ENCODE measurements at regions of chr15 and their contacts with region 1.

Region 1: DNA sequence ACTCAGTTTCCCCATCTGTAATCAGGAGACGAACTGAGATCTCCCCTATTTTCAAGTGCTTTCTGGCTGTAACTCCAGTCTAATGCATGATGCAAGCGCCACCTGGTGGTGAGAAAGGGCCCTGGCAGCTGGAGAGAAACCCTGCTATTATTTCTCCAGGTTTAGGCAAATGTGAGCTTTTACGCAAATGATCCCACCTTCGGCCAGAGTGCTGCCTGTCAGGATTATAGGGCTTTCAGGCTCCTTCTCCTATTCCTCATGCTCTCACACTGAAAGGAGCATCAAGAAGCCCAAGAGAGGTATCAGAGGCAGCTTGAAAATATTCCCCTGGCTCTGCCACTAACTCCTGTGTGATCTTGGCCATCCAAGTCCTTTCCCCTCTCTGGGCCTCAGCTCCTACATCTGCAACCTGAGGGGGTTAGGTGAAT is 93.9 kb upstream of the RASGRF1 start:
- DNase-seq: peak; percentile 25
- ATAC-seq: peak; percentile 94
- H3K4me3 ChIP-seq: no peak overlapping the region
- H3K27ac ChIP-seq: no peak overlapping the region
- H3K4me1 ChIP-seq: no peaks in the 10 kb centered on the region
- H3K27me3 ChIP-seq: peaks cover 0 to 2% of the 10 kb centered on the region in 2 experiments; a peak in 1 of 4 replicates
- CTCF ChIP-seq: peak; percentile 94 to 97 (median 96)
- EP300 ChIP-seq: no peak
- POLR2A ChIP-seq: no peak
- RAD21 ChIP-seq: peak; percentile 97

Region 2: DNA sequence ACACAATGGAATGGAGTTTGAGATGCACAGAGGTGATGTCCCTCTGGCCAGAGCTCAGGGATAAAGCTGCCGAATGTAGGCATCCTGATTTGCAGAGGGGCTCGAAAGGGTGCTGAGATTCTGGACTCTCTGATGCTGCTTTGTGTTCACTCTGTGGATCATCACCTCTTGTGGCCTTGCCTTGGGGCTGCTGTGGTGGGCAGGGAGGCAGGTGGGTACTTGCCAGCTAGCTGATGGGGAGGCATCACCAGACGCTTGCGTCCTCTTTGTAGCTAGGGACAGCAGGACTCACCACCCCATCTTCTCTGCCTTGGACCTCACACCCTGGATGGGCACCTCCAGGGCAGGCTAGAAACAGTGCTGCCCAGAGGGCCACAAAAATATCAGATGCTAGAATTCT is 79.3 kb before region 1 on chr15:
- CTCF ChIA-PET with region 1: interaction called, 25 read pairs
- POLR2A ChIA-PET with region 1: no interaction called
- RAD21 ChIA-PET with region 1: no interaction called
- SMC1A ChIA-PET with region 1: interaction called, 9 read pairs
- in situ Hi-C with region 1: no loop called
- intact Hi-C with region 1: no loop called
- DNase-seq: no peak
- ATAC-seq: no peak
- H3K4me3 ChIP-seq: no peak overlapping the region
- H3K27ac ChIP-seq: no peak overlapping the region
- H3K4me1 ChIP-seq: peaks cover 4% of the 10 kb centered on the region; the same call in 1 of the 2 replicates
- H3K27me3 ChIP-seq: peaks cover 0 to 3% of the 10 kb centered on the region in 2 experiments; a peak in 2 of 4 replicates
- CTCF ChIP-seq: no peak
- EP300 ChIP-seq: no peak
- POLR2A ChIP-seq: no peak
- RAD21 ChIP-seq: no peak

Region 3: GRCh38 chr15:79168922-79169456 is 15.5 kb before region 1 on chr15:
- CTCF ChIA-PET with region 1: interaction called, 17 read pairs
- POLR2A ChIA-PET with region 1: no interaction called
- RAD21 ChIA-PET with region 1: interaction called, 4 read pairs
- SMC1A ChIA-PET with region 1: interaction called, 9 read pairs
- in situ Hi-C with region 1: no loop called
- intact Hi-C with region 1: no loop called
- DNase-seq: no peak
- ATAC-seq: peak; percentile 61
- H3K4me3 ChIP-seq: no peak overlapping the region
- H3K27ac ChIP-seq: no peak overlapping the region
- H3K4me1 ChIP-seq: no peaks in the 10 kb centered on the region
- H3K27me3 ChIP-seq: no peaks in the 10 kb centered on the region; a peak in 3 of 4 replicates
- CTCF ChIP-seq: no peak; a peak in 1 of 6 replicates
- EP300 ChIP-seq: no peak
- POLR2A ChIP-seq: no peak
- RAD21 ChIP-seq: no peak

Region 4: DNA sequence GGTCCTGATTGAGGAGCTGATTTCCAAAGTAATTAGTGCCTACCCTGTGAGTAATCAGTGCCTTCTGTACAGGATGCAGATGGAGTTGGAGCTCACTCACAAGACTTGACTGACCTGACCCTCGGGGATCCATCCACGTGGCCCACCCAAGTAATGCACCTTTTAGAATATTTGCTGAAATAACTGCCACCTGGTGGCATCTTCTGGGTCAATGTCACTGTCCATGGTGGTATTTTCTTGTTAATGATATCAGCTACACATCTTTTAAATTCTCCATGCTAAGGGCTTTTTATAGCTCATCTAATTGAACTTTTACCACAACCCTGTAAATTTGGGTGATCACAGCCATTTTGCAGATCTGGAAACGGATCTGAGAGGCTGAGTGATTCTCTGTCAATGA is 23.7 kb after region 1 on chr15:
- CTCF ChIA-PET with region 1: interaction called, 15 read pairs
- POLR2A ChIA-PET with region 1: no interaction called
- RAD21 ChIA-PET with region 1: no interaction called
- SMC1A ChIA-PET with region 1: interaction called, 5 read pairs
- in situ Hi-C with region 1: no loop called
- intact Hi-C with region 1: no loop called
- DNase-seq: no peak
- ATAC-seq: peak; percentile 46; the same call in 2 of the 3 replicates
- H3K4me3 ChIP-seq: no peak overlapping the region
- H3K27ac ChIP-seq: no peak overlapping the region
- H3K4me1 ChIP-seq: no peaks in the 10 kb centered on the region
- H3K27me3 ChIP-seq: peaks cover 7 to 8% of the 10 kb centered on the region in 2 experiments
- CTCF ChIP-seq: peak in 1 of 3 experiments; percentile 6; a peak in 1 of 6 replicates
- EP300 ChIP-seq: no peak
- POLR2A ChIP-seq: no peak
- RAD21 ChIP-seq: no peak

Measured in GM12878 (cell line).